ENCODE measurements at regions of chr6 and their contacts with region 1.

Region 1: GRCh38 chr6:9830808-9831207 is 584.1 kb downstream of the TFAP2A start:
- DNase-seq: no peak
- H3K4me3 ChIP-seq: no peak overlapping the region
- H3K27ac ChIP-seq: no peak overlapping the region
- H3K4me1 ChIP-seq: no peaks in the 10 kb centered on the region
- H3K27me3 ChIP-seq: no peaks in the 10 kb centered on the region
- CTCF ChIP-seq: no peak
- POLR2A ChIP-seq: no peak

Region 2: DNA sequence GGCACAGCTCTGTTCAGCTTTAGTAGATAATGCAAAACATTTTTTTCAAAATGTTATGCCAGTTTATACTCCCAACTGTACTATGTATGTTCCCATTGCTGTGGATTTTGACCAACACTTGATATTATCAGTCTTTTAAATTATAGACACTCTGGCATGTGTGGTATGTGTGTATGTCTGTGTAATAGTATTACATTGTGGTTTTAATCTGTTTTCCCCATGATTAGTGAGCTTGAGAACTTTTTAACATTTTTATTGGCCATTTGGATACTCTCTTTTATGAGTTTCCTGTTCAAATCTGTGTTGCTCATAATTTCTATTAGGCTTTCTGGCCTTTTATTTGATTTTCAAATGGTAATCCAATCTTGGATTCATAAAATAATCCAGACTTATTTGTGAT is 1851.0 kb before region 1 on chr6:
- intact Hi-C with region 1: loop called (anchors 5 kb)
- DNase-seq: no peak
- H3K4me3 ChIP-seq: no peak overlapping the region
- H3K27ac ChIP-seq: no peak overlapping the region
- H3K4me1 ChIP-seq: peaks cover 14% of the 10 kb centered on the region
- H3K27me3 ChIP-seq: no peaks in the 10 kb centered on the region
- CTCF ChIP-seq: no peak
- POLR2A ChIP-seq: no peak

Measured in vagina (tissue), 2 donors.